ENCODE measurements at regions of chr3 and their contacts with region 1.

Region 1: GRCh38 chr3:69020424-69020823 is 6.9 kb upstream of the EOGT start:
- DNase-seq: no peak
- H3K4me3 ChIP-seq: no peak overlapping the region
- CTCF ChIP-seq: no peak

Region 2: GRCh38 chr3:69033470-69033869 is 13.0 kb after region 1 on chr3:
- CTCF ChIA-PET with region 1: interaction called, 28 read pairs
- POLR2A ChIA-PET with region 1: no interaction called
- DNase-seq: no peak
- H3K4me3 ChIP-seq: no peak overlapping the region
- CTCF ChIP-seq: no peak